ENCODE measurements at regions of chr5 and their contacts with region 1.

Region 1: DNA sequence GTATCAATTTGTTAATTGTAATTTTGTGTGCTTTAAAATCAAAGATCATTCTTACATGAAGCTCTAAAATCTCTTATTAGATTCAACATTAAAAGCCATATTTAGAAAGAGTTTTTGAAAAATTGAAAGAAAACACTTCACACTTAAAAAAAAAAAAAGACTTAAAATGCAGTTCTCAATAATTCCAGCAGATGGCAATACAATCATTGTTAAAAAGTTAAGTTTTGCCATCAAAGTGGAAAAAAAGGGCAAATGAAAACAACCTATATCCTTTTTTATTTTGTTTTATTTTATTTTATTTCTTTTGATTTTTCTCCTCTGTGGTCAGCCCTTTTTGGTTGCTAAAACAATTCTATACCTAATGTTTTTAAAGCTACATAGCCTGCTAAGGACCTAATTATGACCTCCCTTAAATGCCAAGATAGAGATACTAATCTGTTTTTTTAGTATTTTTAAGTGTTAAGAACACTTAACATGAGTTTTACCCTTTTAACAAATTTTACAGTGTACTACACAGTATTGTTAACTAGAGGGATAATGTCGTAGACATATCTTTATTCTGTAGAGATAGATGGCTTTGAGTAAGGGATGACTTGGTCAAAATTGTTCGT is 154.2 kb upstream of the DAB2 start:
- DNase-seq: no peak
- ATAC-seq: no peak

Region 2: GRCh38 chr5:39461026-39461682 is 117.8 kb before region 1 on chr5:
- intact Hi-C with region 1: no loop called
- DNase-seq: peak in 1 of 2 donors; percentile 16
- ATAC-seq: no peak

Region 3: GRCh38 chr5:40688127-40688761 is 1109.3 kb after region 1 on chr5:
- intact Hi-C with region 1: loop called in 1 of 2 experiments (anchors 5 kb)
- DNase-seq: peak; percentile 73 to 90
- ATAC-seq: peak; percentile 77

Region 4: GRCh38 chr5:40736103-40736875 is 1157.3 kb after region 1 on chr5:
- intact Hi-C with region 1: loop called in 1 of 2 experiments (anchors 5 kb)
- DNase-seq: no peak
- ATAC-seq: peak; percentile 44